Endothelial cell of umbilical vein (primary cell): ENCODE measurements at regions of chr5 and their contacts with region 1.

Region 1: GRCh38 chr5:141889282-141889871 is 11.2 kb upstream of the PCDH1 start:
- DNase-seq: peak; percentile 48
- H3K4me3 ChIP-seq: no peak overlapping the region
- H3K27ac ChIP-seq: no peak overlapping the region
- H3K4me1 ChIP-seq: no peaks in the 10 kb centered on the region
- H3K27me3 ChIP-seq: peaks cover 0 to 12% of the 10 kb centered on the region in 2 experiments
- CTCF ChIP-seq: peak; percentile 10 to 43
- POLR2A ChIP-seq: no peak

Region 2: GRCh38 chr5:141914199-141914743 is 24.9 kb after region 1 on chr5:
- CTCF ChIA-PET with region 1: interaction called, 22 read pairs
- POLR2A ChIA-PET with region 1: no interaction called
- dilution Hi-C with region 1: no loop called
- intact Hi-C with region 1: no loop called
- DNase-seq: peak; percentile 9
- H3K4me3 ChIP-seq: peak overlapping the region in 1 of 3 experiments; percentile 20
- H3K27ac ChIP-seq: no peak overlapping the region
- H3K4me1 ChIP-seq: peaks cover 3% of the 10 kb centered on the region
- H3K27me3 ChIP-seq: peaks cover 9 to 14% of the 10 kb centered on the region in 2 experiments
- CTCF ChIP-seq: peak in 1 of 2 donors; percentile 43
- POLR2A ChIP-seq: no peak

Region 3: GRCh38 chr5:141923448-141924352 is 34.3 kb after region 1 on chr5 and contains the start of gene DELE1:
- CTCF ChIA-PET with region 1: interaction called, 19 read pairs
- POLR2A ChIA-PET with region 1: no interaction called
- dilution Hi-C with region 1: no loop called
- intact Hi-C with region 1: no loop called
- DNase-seq: peak; percentile 95
- H3K4me3 ChIP-seq: peak within 1 kb of the TSS; percentile 28 to 63 (median 47)
- H3K27ac ChIP-seq: peak within 1 kb of the TSS; percentile 84
- H3K4me1 ChIP-seq: peaks cover 15% of the 10 kb centered on the region
- H3K27me3 ChIP-seq: no peaks in the 10 kb centered on the region
- CTCF ChIP-seq: no peak
- POLR2A ChIP-seq: peak; percentile 76
- total RNA-seq, gene DELE1: 67.0 and 105 TPM in 2 replicates

Region 4: DNA sequence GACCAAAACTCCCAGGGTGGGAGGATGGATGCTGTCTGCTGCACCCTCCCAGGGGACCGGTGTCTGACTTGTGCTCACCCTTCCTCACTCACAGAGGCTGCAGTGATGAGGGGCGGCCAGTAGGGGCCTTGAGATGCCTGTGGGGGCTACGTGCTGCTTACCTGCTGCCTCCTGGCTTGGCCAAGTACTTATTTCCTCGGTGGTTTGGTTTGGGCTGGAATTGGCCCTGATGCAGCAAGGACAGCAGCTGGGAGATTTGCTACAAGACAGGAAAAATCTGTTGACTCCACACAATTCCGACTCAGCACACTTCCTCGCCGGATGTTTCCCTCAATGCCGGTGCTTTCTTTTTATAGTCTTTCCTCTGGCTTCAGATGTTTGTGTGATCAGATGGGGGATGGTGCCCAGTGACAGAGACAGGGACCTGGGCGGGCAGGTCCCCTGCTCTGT is 62.0 kb after region 1 on chr5:
- CTCF ChIA-PET with region 1: interaction called, 303 read pairs
- POLR2A ChIA-PET with region 1: no interaction called
- dilution Hi-C with region 1: no loop called
- intact Hi-C with region 1: no loop called
- DNase-seq: peak; percentile 69
- H3K4me3 ChIP-seq: no peak overlapping the region
- H3K27ac ChIP-seq: no peak overlapping the region
- H3K4me1 ChIP-seq: peaks cover 51% of the 10 kb centered on the region
- H3K27me3 ChIP-seq: no peaks in the 10 kb centered on the region
- CTCF ChIP-seq: peak; percentile 34 to 65
- POLR2A ChIP-seq: no peak